IMR-90 (cell line): ENCODE measurements at regions of chr12 and their contacts with region 1.

Region 1: DNA sequence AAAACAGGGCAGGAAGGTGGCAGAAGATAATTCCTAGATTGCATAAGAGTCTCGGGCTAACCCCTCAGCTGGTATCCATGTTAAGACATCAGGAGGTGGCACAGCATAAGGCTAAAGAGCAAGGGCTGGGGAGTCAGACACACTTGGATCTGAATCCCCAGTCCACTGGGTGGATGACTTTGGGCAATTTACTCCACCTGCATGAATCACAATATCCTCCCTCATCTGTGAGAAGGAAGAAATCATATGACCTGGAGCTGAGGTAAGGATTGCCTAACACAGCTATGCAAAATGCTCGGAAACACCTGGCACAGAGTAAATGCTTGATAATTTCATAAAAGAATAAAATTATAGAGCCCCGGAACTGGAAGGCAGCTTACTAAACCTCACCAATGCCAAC is 217.9 kb downstream of the PIK3C2G start:
- DNase-seq: no peak
- ATAC-seq: no peak
- H3K4me3 ChIP-seq: no peak overlapping the region
- H3K27ac ChIP-seq: no peak overlapping the region
- H3K4me1 ChIP-seq: no peaks in the 10 kb centered on the region
- H3K27me3 ChIP-seq: no peaks in the 10 kb centered on the region
- CTCF ChIP-seq: no peak
- POLR2A ChIP-seq: no peak
- RAD21 ChIP-seq: no peak

Region 2: GRCh38 chr12:18373181-18373580 is 106.1 kb before region 1 on chr12:
- CTCF ChIA-PET with region 1: no interaction called
- POLR2A ChIA-PET with region 1: no interaction called
- dilution Hi-C with region 1: no loop called
- in situ Hi-C with region 1: no loop called
- intact Hi-C with region 1: no loop called
- DNase-seq: no peak
- ATAC-seq: no peak
- H3K4me3 ChIP-seq: no peak overlapping the region
- H3K27ac ChIP-seq: no peak overlapping the region
- H3K4me1 ChIP-seq: no peaks in the 10 kb centered on the region
- H3K27me3 ChIP-seq: no peaks in the 10 kb centered on the region
- CTCF ChIP-seq: no peak
- POLR2A ChIP-seq: no peak
- RAD21 ChIP-seq: no peak

Region 3: DNA sequence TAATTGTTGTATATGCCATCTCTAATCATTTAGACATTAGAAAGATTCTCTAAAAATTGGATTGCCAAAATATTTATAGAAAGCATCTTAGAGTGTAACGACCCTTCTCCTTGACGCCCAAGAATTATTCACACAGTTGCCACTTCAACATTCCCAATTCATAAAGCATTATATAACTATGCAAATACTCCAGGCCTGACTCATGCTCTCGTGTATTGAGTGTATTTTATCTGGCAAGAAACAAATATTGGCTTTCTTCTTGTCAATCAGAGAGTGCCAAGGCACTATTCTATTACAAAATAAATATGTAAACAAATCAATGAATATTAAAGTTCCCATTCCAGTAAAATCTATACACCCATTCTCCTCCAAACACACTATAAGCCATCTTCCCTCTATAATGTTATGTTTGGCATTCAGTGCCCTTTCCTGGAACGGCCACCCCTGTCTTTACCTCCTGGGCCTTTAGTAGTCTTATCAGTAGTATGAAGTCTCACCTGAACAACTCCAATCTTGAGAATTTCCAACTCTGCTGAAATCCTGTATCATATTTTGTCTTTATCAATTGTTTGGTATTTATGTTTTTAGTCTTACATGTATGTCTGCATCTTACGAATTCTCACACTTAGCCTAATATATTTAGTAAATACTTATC is 35.4 kb before region 1 on chr12:
- CTCF ChIA-PET with region 1: no interaction called
- POLR2A ChIA-PET with region 1: no interaction called
- dilution Hi-C with region 1: no loop called
- in situ Hi-C with region 1: no loop called
- intact Hi-C with region 1: loop called (anchors 2 kb)
- DNase-seq: peak; percentile 26
- ATAC-seq: no peak
- H3K4me3 ChIP-seq: no peak overlapping the region
- H3K27ac ChIP-seq: no peak overlapping the region
- H3K4me1 ChIP-seq: no peaks in the 10 kb centered on the region
- H3K27me3 ChIP-seq: no peaks in the 10 kb centered on the region
- CTCF ChIP-seq: no peak
- POLR2A ChIP-seq: no peak
- RAD21 ChIP-seq: no peak